MCF 10A (cell line): ENCODE measurements at regions of chr1 and their contacts with region 1.

Region 1: GRCh38 chr1:229258031-229258756 is 12.7 kb upstream of the RAB4A start:
- DNase-seq: peak; percentile 88
- H3K4me3 Mint-ChIP-seq: no peak overlapping the region
- H3K27ac Mint-ChIP-seq: no peak overlapping the region
- H3K4me1 Mint-ChIP-seq: peaks cover 23% of the 10 kb centered on the region
- H3K27me3 Mint-ChIP-seq: no peaks in the 10 kb centered on the region
- CTCF ChIP-seq: peak; percentile 98

Region 2: GRCh38 chr1:228664399-228664914 is 593.7 kb before region 1 on chr1:
- CTCF ChIA-PET with region 1: interaction called, 176 read pairs
- POLR2A ChIA-PET with region 1: interaction called, 22 read pairs
- intact Hi-C with region 1: loop called (anchors 1 kb)
- DNase-seq: peak; percentile 96
- H3K4me3 Mint-ChIP-seq: no peak overlapping the region
- H3K27ac Mint-ChIP-seq: no peak overlapping the region
- H3K4me1 Mint-ChIP-seq: no peaks in the 10 kb centered on the region
- H3K27me3 Mint-ChIP-seq: no peaks in the 10 kb centered on the region
- CTCF ChIP-seq: peak; percentile 99

Region 3: GRCh38 chr1:228697207-228698016 is 560.8 kb before region 1 on chr1:
- CTCF ChIA-PET with region 1: interaction called, 128 read pairs
- POLR2A ChIA-PET with region 1: interaction called, 20 read pairs
- intact Hi-C with region 1: loop called (anchors 1 kb)
- DNase-seq: peak; percentile 100
- H3K4me3 Mint-ChIP-seq: no peak overlapping the region
- H3K27ac Mint-ChIP-seq: peak overlapping the region; percentile 24
- H3K4me1 Mint-ChIP-seq: peaks cover 32% of the 10 kb centered on the region
- H3K27me3 Mint-ChIP-seq: no peaks in the 10 kb centered on the region
- CTCF ChIP-seq: no peak

Region 4: GRCh38 chr1:228938537-228938901 is 319.7 kb before region 1 on chr1:
- CTCF ChIA-PET with region 1: no interaction called
- POLR2A ChIA-PET with region 1: no interaction called
- intact Hi-C with region 1: no loop called
- DNase-seq: no peak
- H3K4me3 Mint-ChIP-seq: no peak overlapping the region
- H3K27ac Mint-ChIP-seq: no peak overlapping the region
- H3K4me1 Mint-ChIP-seq: peaks cover 7% of the 10 kb centered on the region
- H3K27me3 Mint-ChIP-seq: peaks cover 34% of the 10 kb centered on the region
- CTCF ChIP-seq: no peak

Region 5: GRCh38 chr1:229079016-229079595 is 179.1 kb before region 1 on chr1:
- CTCF ChIA-PET with region 1: no interaction called
- POLR2A ChIA-PET with region 1: no interaction called
- intact Hi-C with region 1: no loop called
- DNase-seq: no peak
- H3K4me3 Mint-ChIP-seq: no peak overlapping the region
- H3K27ac Mint-ChIP-seq: no peak overlapping the region
- H3K4me1 Mint-ChIP-seq: peaks cover 14% of the 10 kb centered on the region
- H3K27me3 Mint-ChIP-seq: peaks cover 26% of the 10 kb centered on the region
- CTCF ChIP-seq: no peak

Region 6: DNA sequence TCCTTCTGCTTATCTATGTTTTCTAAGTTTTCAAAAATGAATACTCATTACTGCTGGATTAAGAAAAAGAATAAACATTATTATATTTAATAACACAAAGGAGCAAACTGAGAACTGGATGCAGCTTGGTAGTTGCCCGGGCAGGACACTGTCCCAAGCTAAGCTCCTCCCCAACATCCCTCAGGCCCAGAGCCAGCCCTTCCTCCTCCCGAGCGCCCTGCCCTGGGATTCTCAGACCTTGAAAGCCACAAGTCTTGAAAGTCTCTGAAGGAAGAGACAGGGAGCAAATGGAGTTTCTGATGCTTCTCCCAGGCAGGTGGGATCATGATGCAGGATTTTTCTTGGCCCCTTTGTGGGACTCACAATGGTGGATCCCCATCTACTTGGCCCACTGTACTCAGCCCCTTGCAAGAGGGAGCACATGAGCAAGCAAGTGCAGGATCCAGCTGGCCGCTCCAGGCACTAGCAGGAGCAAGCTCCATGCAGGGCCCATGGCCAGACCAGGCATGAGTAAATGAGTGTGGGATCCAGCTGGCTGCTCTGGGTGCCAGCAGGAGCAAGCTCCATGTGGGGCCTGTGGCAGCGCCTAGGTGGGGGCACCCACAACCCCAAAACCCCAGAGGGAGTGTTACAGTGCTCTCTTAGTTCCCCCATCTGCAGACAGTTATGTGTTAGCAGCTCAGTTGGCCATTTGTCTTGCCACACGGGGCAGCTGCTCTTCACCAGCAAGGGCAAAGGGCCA is 19.3 kb before region 1 on chr1:
- CTCF ChIA-PET with region 1: interaction called, 34 read pairs
- POLR2A ChIA-PET with region 1: interaction called, 126 read pairs
- intact Hi-C with region 1: no loop called
- DNase-seq: peak; percentile 78
- H3K4me3 Mint-ChIP-seq: no peak overlapping the region
- H3K27ac Mint-ChIP-seq: peak overlapping the region; percentile 92
- H3K4me1 Mint-ChIP-seq: peaks cover 20% of the 10 kb centered on the region
- H3K27me3 Mint-ChIP-seq: no peaks in the 10 kb centered on the region
- CTCF ChIP-seq: no peak

Region 7: GRCh38 chr1:229452956-229453801 is 195.0 kb after region 1 on chr1:
- CTCF ChIA-PET with region 1: interaction called, 216 read pairs
- POLR2A ChIA-PET with region 1: interaction called, 4 read pairs
- intact Hi-C with region 1: loop called (anchors 1 kb)
- DNase-seq: peak; percentile 51
- H3K4me3 Mint-ChIP-seq: no peak overlapping the region
- H3K27ac Mint-ChIP-seq: no peak overlapping the region
- H3K4me1 Mint-ChIP-seq: peaks cover 6% of the 10 kb centered on the region
- H3K27me3 Mint-ChIP-seq: no peaks in the 10 kb centered on the region
- CTCF ChIP-seq: peak; percentile 67

Region 8: DNA sequence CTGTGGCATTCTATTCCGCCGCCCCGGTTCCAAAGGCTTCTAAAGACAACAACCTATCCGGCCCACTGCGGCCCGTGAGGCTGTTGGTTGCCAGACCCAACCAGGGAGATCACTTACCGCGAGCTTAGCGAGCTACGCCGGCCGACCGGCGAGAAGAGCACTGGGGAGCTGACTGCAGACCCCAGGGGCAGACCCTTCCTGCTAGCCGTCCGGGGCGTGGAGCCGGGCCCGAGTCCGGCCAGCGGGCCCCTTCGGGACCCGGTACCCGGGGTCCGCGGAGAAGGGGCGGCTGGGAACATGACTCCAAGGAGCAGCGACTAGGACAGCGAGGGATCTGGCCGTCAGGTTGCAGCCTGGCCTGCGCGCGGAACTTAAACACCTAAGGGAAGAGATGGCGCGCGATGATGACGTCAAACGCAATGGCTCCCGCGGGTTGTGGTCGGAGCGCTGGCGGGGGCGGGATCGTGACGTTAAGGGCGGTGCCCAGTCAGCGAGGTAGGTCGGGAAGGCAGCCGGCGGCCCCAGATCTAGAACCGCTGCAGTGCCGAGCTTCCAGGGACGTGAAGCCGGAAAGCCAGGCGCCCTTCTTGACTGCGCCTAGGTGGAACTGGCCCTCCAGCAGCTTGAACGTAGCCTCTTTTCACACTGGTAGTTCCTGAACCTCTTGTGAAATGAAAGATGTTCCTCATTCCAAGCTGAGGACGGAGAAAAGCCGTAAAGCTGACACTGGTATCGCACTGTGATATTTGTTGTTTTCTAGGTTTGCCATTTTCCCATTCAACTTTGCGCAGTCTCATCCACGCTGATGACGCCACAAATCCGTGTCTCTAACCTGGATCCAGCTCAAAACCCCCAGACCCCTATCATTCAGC is 250.0 kb after region 1 on chr1 and contains the start of gene NUP133:
- CTCF ChIA-PET with region 1: interaction called, 8 read pairs
- POLR2A ChIA-PET with region 1: interaction called, 12 read pairs
- intact Hi-C with region 1: no loop called
- DNase-seq: peak; percentile 100
- H3K4me3 Mint-ChIP-seq: peak within 1 kb of the TSS; percentile 88
- H3K27ac Mint-ChIP-seq: peak within 1 kb of the TSS; percentile 99
- H3K4me1 Mint-ChIP-seq: peaks cover 13% of the 10 kb centered on the region
- H3K27me3 Mint-ChIP-seq: no peaks in the 10 kb centered on the region
- CTCF ChIP-seq: no peak
- total RNA-seq, gene NUP133: 65.2 and 67.3 TPM in 2 replicates